ENCODE measurements at regions of chr12 and their contacts with region 1.

Region 1: GRCh38 chr12:112906712-112907414 is at the start of gene OAS1:
- DNase-seq: peak; percentile 63 to 74 (median 65)
- H3K4me3 ChIP-seq: peak within 1 kb of the TSS; percentile 95 to 100 (median 96)
- H3K4me3 Mint-ChIP-seq: peak within 1 kb of the TSS; percentile 96 to 98
- H3K27ac ChIP-seq: peak within 1 kb of the TSS; percentile 87 to 90
- H3K27ac Mint-ChIP-seq: peak within 1 kb of the TSS; percentile 94 to 99 (median 96)
- H3K4me1 ChIP-seq: peaks cover 64% of the 10 kb centered on the region in 2 donors
- H3K4me1 Mint-ChIP-seq: peaks cover 75% of the 10 kb centered on the region
- H3K27me3 ChIP-seq: no peaks in the 10 kb centered on the region
- H3K27me3 Mint-ChIP-seq: peaks cover 0 to 4% (median 1%) of the 10 kb centered on the region in 3 donors
- CTCF ChIP-seq: no peak
- polyA plus RNA-seq, gene OAS1: 111 to 237 (median 237) TPM

Region 2: DNA sequence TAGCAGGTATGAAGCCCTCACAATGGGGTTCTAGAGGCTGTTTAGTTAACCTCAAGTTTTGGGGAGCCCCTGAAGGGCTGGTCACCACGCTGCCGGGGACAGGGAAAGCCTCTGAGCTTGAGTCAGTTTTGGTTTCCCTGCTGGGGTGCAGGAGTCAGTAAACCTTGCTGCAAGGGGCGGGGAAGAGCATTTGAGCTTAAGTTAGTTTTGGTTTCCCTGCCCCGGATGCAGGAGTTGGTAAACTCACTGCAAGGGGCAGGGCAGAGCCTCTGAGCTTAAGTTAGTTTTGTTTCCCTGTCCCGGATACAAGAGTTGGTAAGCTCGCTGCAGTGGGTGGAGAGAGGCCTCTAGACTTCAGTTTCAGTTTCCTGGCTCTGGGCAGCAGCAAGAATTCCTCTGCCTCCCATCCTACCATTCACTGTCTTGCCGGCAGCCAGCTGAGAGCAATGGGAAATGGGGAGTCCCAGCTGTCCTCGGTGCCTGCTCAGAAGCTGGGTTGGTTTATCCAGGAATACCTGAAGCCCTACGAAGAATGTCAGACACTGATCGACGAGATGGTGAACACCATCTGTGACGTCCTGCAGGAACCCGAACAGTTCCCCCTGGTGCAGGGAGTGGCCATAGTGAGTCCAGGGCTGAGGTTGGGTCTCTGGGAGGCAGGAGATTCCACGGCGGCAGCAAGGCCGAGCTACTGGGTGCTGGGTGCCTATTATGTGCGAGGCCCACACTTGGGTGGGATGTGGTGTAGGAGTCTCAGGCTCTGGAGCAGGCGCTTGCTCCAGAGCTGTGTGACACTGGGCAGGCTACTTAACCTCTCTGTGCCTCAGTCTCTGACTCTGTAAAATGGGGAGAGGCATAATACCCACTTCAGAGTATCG is 71.5 kb after region 1 on chr12 and contains the start of gene OAS2:
- intact Hi-C with region 1: loop called in 1 of 2 experiments (anchors 5 kb)
- DNase-seq: peak; percentile 77 to 84 (median 82)
- H3K4me3 ChIP-seq: peak within 1 kb of the TSS; percentile 76 to 87 (median 85)
- H3K4me3 Mint-ChIP-seq: peak within 1 kb of the TSS; percentile 96 to 98
- H3K27ac ChIP-seq: peak within 1 kb of the TSS; percentile 92 to 95
- H3K27ac Mint-ChIP-seq: peak within 1 kb of the TSS; percentile 98 to 99 (median 99)
- H3K4me1 ChIP-seq: peaks cover 34 to 49% of the 10 kb centered on the region in 2 donors
- H3K4me1 Mint-ChIP-seq: peaks cover 48% of the 10 kb centered on the region
- H3K27me3 ChIP-seq: no peaks in the 10 kb centered on the region
- H3K27me3 Mint-ChIP-seq: no peaks in the 10 kb centered on the region
- CTCF ChIP-seq: no peak
- polyA plus RNA-seq, gene OAS2: 27.7 to 55.9 (median 40.1) TPM

Region 3: DNA sequence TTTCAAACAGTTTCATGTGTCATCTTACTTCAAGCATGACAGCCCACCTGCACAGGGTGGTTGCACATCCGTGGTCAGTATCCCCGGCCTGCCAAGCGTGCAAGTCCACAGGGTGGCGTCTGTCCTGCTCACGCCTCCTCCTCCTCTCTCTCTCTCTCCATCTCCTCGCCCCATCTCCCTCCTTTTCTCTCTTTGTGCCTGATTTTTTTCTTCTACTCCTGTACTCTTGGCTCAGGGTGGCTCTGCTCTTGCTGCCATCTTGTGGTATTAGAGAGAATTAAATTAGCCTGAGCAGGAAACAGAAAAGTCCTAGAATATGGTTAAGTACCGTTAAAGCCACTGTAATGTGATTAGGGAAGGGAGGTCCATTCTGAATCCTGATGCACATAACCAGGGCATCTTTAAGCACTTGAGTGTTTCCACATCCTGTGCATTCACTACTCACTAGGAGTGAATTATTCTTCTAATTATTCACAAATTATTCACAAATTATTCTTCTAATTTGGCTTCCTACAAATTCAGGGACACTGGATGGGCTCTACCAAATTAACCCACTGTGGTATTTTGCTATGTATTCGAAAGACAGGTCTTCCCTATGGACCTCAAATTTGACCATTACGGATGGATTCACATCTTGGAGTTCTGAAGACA is 124.1 kb after region 1 on chr12:
- intact Hi-C with region 1: loop called in 1 of 2 experiments (anchors 10 kb)
- DNase-seq: peak; percentile 12 to 46 (median 32)
- H3K4me3 ChIP-seq: no peak overlapping the region
- H3K4me3 Mint-ChIP-seq: no peak overlapping the region
- H3K27ac ChIP-seq: no peak overlapping the region
- H3K27ac Mint-ChIP-seq: no peak overlapping the region
- H3K4me1 ChIP-seq: no peaks in the 10 kb centered on the region
- H3K4me1 Mint-ChIP-seq: peaks cover 3% of the 10 kb centered on the region
- H3K27me3 ChIP-seq: peaks cover 0 to 3% of the 10 kb centered on the region in 2 donors
- H3K27me3 Mint-ChIP-seq: peaks cover under 1 to 11% (median 11%) of the 10 kb centered on the region in 3 donors
- CTCF ChIP-seq: peak; percentile 83

Region 4: DNA sequence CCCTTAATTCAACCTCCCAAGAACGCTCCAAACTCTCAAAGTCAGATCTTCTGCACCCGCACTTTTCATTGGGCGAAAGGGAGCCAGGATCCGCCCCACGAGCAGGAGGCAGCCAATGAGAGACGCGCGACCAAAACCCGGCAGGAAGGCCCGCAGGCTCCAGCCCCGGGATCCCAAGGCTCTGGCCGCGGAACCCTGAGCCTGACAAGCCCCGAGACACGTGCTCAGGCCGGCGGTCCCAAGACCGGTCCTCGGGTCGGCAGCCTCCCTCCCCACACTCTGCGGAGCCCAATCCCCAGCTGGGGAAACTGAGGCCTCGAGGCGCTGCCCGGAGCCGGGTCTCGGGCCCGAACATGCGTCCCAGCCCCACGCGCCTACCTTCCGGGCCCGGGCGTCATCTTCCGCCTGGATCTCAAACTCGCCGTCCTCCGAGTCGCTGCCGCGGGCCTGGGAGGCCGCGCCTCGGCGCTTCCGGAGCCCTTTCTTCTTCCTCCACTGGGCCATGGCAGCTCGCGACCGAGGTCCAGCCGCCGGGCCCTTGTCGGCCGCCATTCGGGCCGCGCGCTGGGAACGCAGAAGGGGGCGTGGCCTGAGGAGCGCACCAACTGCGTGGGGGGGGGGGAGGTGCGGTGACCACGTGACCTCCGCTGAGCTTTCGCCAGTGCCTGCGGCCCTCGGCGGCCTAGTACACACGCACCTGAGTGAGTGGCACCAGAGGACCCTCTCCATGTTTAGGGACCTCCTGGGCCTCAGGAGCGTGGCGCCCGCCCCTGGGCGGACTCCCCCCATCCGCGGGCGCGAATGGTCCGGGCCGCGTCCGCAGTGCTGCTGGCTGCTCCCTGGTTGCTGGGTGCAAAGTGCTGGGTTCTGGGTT is 278.3 kb after region 1 on chr12 and contains the starts of genes DDX54 and RITA1:
- intact Hi-C with region 1: loop called in 1 of 2 experiments (anchors 10 kb)
- DNase-seq: peak; percentile 82 to 84 (median 83)
- H3K4me3 ChIP-seq: peak within 1 kb of the TSS; percentile 77 to 94 (median 83)
- H3K4me3 Mint-ChIP-seq: peak within 1 kb of the TSS; percentile 90 to 96
- H3K27ac ChIP-seq: peak within 1 kb of the TSS; percentile 82 to 98
- H3K27ac Mint-ChIP-seq: peak within 1 kb of the TSS; percentile 83 to 91 (median 89)
- H3K4me1 ChIP-seq: peaks cover 18 to 34% of the 10 kb centered on the region in 2 donors
- H3K4me1 Mint-ChIP-seq: peaks cover 30% of the 10 kb centered on the region
- H3K27me3 ChIP-seq: no peaks in the 10 kb centered on the region
- H3K27me3 Mint-ChIP-seq: peaks cover 0 to 3% (median 0%) of the 10 kb centered on the region in 3 donors
- CTCF ChIP-seq: no peak
- polyA plus RNA-seq, gene DDX54: 7.9 to 32.2 (median 13.6) TPM
- polyA plus RNA-seq, gene RITA1: 4.9 to 17.6 (median 16.4) TPM

Measured in CD14-positive monocyte (primary cell).